ENCODE measurements at regions of chr3 and their contacts with region 1.

Region 1: DNA sequence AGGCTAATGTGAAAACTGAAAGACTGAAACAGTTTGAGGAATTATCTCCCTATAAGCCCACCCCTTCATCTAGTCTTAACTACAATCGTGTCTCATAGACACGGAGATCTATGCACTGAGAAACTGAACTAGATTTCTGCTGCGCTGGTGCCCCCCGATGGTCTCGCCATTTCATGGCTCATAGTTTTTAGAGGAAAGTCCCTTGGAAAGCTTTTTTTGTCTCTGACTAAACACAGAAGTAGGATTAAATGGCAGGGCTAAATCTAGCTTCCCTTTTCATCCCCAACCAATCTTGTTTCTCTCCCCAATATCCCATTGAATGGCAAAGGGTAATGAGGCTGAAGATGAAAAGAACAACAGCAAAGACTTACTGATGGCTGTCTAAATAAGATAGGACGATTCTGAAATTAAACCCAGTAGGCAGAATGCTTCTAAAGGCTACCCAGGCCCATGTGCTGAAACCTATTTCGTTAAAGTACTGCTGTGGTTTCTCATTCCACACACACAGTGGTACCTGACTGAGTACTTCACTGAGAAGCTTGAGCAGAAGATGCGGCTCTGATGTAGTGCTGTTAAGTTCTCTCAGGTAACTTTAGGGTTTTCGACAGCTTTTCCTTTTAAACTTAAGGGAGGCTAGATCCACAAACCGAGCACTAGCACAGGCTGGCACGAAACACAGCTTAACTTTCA is 142.7 kb downstream of the GADL1 start:
- DNase-seq: peak; percentile 15
- ATAC-seq: peak; percentile 71
- H3K4me3 ChIP-seq: no peak overlapping the region
- H3K27ac ChIP-seq: no peak overlapping the region
- H3K4me1 ChIP-seq: peaks cover 9 to 24% of the 10 kb centered on the region in 2 experiments; a peak in 3 of 4 replicates
- H3K27me3 ChIP-seq: no peaks in the 10 kb centered on the region
- CTCF ChIP-seq: peak; percentile 51 to 68 (median 56); a peak in 5 of 6 replicates
- POLR2A ChIP-seq: no peak
- RAD21 ChIP-seq: peak; percentile 78

Region 2: DNA sequence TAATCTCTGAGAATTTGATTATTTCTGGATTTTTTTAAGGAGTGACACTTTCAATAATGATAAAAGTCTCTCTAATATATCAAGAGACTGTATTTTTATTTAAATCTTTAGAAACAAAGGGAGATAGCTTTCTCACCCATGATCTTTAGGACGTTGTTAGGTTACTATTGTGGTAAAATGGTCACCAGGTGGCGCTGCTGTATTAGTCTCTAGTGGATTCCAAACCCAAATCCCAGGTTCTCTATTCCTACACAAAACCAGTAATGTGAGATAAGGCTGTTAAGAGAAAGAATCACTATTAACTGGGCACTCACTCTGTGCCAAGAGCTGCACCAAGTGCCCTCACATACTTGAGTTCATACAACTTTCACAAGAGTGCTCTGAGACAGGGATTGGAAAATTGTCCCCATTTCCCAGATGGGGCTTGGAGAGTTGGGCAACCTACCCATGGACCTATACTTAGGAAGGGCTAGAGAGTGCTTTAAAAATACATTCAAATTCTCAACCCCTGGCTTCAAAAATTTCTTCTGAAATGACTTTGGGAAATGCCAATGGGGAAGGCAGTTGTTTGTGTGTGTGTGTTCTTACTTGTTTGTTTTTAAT is 738.7 kb before region 1 on chr3:
- CTCF ChIA-PET with region 1: interaction called, 8 read pairs
- POLR2A ChIA-PET with region 1: no interaction called
- RAD21 ChIA-PET with region 1: interaction called in 1 of 2 experiments, 3 read pairs
- intact Hi-C with region 1: loop called (anchors 1 kb)
- DNase-seq: peak; percentile 64
- ATAC-seq: peak; percentile 93
- H3K4me3 ChIP-seq: no peak overlapping the region
- H3K27ac ChIP-seq: no peak overlapping the region
- H3K4me1 ChIP-seq: no peaks in the 10 kb centered on the region
- H3K27me3 ChIP-seq: no peaks in the 10 kb centered on the region
- CTCF ChIP-seq: peak; percentile 38 to 83 (median 62); a peak in 5 of 6 replicates
- POLR2A ChIP-seq: no peak
- RAD21 ChIP-seq: peak; percentile 85

Region 3: GRCh38 chr3:30042274-30042859 is 709.4 kb before region 1 on chr3:
- CTCF ChIA-PET with region 1: interaction called, 13 read pairs
- POLR2A ChIA-PET with region 1: interaction called, 3 read pairs
- RAD21 ChIA-PET with region 1: interaction called in 1 of 2 experiments, 5 read pairs
- intact Hi-C with region 1: loop called (anchors 1 kb)
- DNase-seq: peak; percentile 76
- ATAC-seq: peak; percentile 84
- H3K4me3 ChIP-seq: no peak overlapping the region
- H3K27ac ChIP-seq: no peak overlapping the region
- H3K4me1 ChIP-seq: no peaks in the 10 kb centered on the region
- H3K27me3 ChIP-seq: no peaks in the 10 kb centered on the region
- CTCF ChIP-seq: peak; percentile 60 to 83 (median 79)
- POLR2A ChIP-seq: no peak
- RAD21 ChIP-seq: peak; percentile 93

Region 4: GRCh38 chr3:30112902-30113484 is 638.8 kb before region 1 on chr3:
- CTCF ChIA-PET with region 1: no interaction called
- POLR2A ChIA-PET with region 1: no interaction called
- RAD21 ChIA-PET with region 1: no interaction called
- intact Hi-C with region 1: loop called (anchors 2 kb)
- DNase-seq: peak; percentile 23
- ATAC-seq: peak; percentile 66
- H3K4me3 ChIP-seq: no peak overlapping the region
- H3K27ac ChIP-seq: no peak overlapping the region
- H3K4me1 ChIP-seq: no peaks in the 10 kb centered on the region; a peak in 1 of 4 replicates
- H3K27me3 ChIP-seq: no peaks in the 10 kb centered on the region
- CTCF ChIP-seq: peak; percentile 55 to 72 (median 68); a peak in 5 of 6 replicates
- POLR2A ChIP-seq: no peak
- RAD21 ChIP-seq: peak; percentile 79

Region 5: GRCh38 chr3:30319713-30320112 is 432.0 kb before region 1 on chr3:
- CTCF ChIA-PET with region 1: no interaction called
- POLR2A ChIA-PET with region 1: no interaction called
- RAD21 ChIA-PET with region 1: no interaction called
- intact Hi-C with region 1: loop called (anchors 5 kb)
- DNase-seq: peak; percentile 73
- ATAC-seq: peak; percentile 97
- H3K4me3 ChIP-seq: no peak overlapping the region
- H3K27ac ChIP-seq: no peak overlapping the region
- H3K4me1 ChIP-seq: peaks cover 5 to 16% of the 10 kb centered on the region in 2 experiments; a peak in 3 of 4 replicates
- H3K27me3 ChIP-seq: no peaks in the 10 kb centered on the region
- CTCF ChIP-seq: peak; percentile 40 to 67 (median 55); a peak in 5 of 6 replicates
- POLR2A ChIP-seq: no peak
- RAD21 ChIP-seq: peak; percentile 79

Region 6: GRCh38 chr3:30597131-30597768 is 154.5 kb before region 1 on chr3:
- CTCF ChIA-PET with region 1: no interaction called
- POLR2A ChIA-PET with region 1: no interaction called
- RAD21 ChIA-PET with region 1: no interaction called
- intact Hi-C with region 1: no loop called
- DNase-seq: peak; percentile 94
- ATAC-seq: peak; percentile 79
- H3K4me3 ChIP-seq: peak overlapping the region in 1 of 2 experiments; percentile 21; a peak in 2 of 4 replicates
- H3K27ac ChIP-seq: peak overlapping the region; percentile 82
- H3K4me1 ChIP-seq: peaks cover 41 to 59% of the 10 kb centered on the region in 2 experiments
- H3K27me3 ChIP-seq: no peaks in the 10 kb centered on the region
- CTCF ChIP-seq: no peak
- POLR2A ChIP-seq: no peak
- RAD21 ChIP-seq: no peak; the same call in 1 of the 2 replicates

Measured in HCT116 (cell line).